ENCODE measurements at regions of chr13 and their contacts with region 1.

Region 1: DNA sequence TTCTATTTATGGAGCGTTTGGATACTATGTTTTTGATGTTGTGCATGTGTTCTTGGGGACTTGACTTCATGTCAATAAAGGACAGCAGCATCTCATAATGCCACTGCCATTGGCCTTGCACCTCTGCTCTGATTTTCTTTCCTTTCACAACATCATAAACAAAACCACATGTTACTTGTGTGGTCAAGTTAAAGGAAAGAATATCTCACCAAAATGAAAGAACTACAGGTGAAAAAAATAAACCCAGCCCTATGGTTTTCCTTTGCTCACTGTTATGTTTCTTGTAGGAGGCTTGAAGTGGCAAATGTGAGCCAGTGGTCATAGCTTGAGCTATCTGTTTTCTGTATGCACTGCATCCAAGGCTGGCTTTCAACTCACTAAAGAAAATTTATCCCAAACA is 240.4 kb downstream of the KCNRG start:
- DNase-seq: no peak
- H3K4me3 Mint-ChIP-seq: no peak overlapping the region
- H3K27ac Mint-ChIP-seq: no peak overlapping the region
- H3K4me1 Mint-ChIP-seq: peaks cover 27% of the 10 kb centered on the region
- H3K27me3 Mint-ChIP-seq: peaks cover 54% of the 10 kb centered on the region

Region 2: GRCh38 chr13:50222569-50223332 is 32.9 kb before region 1 on chr13:
- intact Hi-C with region 1: loop called (anchors 5 kb)
- DNase-seq: peak; percentile 56
- H3K4me3 Mint-ChIP-seq: no peak overlapping the region
- H3K27ac Mint-ChIP-seq: no peak overlapping the region
- H3K4me1 Mint-ChIP-seq: peaks cover 37% of the 10 kb centered on the region
- H3K27me3 Mint-ChIP-seq: peaks cover 40% of the 10 kb centered on the region

Region 3: GRCh38 chr13:50236898-50237318 is 18.7 kb before region 1 on chr13:
- intact Hi-C with region 1: loop called (anchors 1 kb)
- DNase-seq: peak; percentile 83
- H3K4me3 Mint-ChIP-seq: peak overlapping the region; percentile 23
- H3K27ac Mint-ChIP-seq: peak overlapping the region; percentile 84
- H3K4me1 Mint-ChIP-seq: peaks cover 34% of the 10 kb centered on the region
- H3K27me3 Mint-ChIP-seq: peaks cover 29% of the 10 kb centered on the region

Region 4: GRCh38 chr13:50244713-50245574 is 10.7 kb before region 1 on chr13:
- intact Hi-C with region 1: loop called (anchors 1 kb)
- DNase-seq: peak; percentile 78
- H3K4me3 Mint-ChIP-seq: peak overlapping the region; percentile 41
- H3K27ac Mint-ChIP-seq: peak overlapping the region; percentile 73
- H3K4me1 Mint-ChIP-seq: peaks cover 34% of the 10 kb centered on the region
- H3K27me3 Mint-ChIP-seq: peaks cover 33% of the 10 kb centered on the region